ENCODE measurements at regions of chr3 and their contacts with region 1.

Region 1: GRCh38 chr3:9302425-9303181 is 53.2 kb upstream of the SRGAP3 start:
- DNase-seq: no peak
- H3K4me3 ChIP-seq: no peak overlapping the region
- H3K27me3 ChIP-seq: no peaks in the 10 kb centered on the region
- CTCF ChIP-seq: peak; percentile 91

Region 2: DNA sequence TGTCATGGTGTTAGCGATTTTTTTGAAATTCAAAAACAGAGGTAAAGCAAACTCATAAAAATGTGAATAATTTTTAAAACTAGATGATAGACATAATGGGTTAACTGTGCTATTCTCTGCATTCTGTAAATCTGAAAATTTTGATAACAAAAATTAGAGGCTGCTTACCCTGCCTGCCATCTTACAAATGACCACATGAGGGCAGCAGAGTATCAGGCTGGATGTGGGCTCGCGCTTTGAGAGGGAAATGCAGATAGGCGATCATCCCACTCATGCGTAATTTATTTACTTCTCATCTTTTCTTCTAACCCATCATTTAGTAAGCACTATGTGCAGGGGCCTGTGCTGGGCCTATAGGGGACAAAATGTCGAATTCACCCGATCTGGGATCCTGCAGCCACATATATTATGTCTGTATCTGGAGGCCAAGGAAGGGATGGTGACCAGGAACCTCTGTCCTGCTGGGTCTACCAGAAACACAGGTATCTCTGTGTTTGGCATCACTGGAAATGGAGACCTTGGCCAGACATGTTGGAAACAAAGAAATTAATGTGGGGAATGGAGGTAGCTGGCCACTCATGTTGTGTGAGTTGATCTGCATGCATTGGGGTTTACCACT is 331.5 kb before region 1 on chr3:
- CTCF ChIA-PET with region 1: interaction called, 28 read pairs
- POLR2A ChIA-PET with region 1: no interaction called
- DNase-seq: no peak
- H3K4me3 ChIP-seq: no peak overlapping the region
- H3K27me3 ChIP-seq: no peaks in the 10 kb centered on the region
- CTCF ChIP-seq: peak; percentile 93

Region 3: DNA sequence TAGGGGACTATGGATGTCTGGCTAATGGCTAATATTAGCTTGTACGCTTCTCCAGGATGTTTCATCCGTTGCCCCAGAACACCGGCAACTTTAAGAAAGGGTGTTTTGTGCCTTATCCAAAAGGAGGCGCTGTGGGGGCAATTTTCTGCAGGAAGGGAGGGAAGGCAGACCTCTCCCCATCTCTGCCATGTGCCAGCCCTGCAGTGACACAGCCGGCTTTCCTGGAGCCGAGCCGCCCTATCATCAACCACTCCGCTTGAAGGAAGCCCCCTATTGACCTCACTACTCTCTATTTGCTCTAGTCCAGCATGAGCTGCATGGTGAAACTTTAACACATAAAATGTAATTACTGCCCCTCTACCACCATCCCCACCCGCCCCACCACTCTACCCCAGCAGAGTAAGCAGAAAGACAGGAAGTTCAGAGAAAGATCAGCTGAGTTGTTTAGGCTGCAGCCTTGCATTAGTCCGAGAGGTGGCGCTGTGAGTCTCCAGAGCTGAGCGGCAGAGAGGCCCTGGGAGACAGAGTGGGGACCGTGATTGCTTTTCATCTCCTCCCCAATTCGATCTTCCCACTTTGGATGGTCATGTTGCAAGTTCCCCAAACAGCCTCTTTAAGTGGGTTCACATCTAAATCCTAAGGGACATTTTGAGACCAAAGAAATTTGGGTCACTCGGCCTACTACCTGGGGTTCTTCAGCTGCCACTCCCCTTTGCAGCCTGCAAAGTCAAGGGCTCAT is 314.8 kb before region 1 on chr3:
- CTCF ChIA-PET with region 1: interaction called, 27 read pairs
- POLR2A ChIA-PET with region 1: no interaction called
- DNase-seq: no peak
- H3K4me3 ChIP-seq: no peak overlapping the region
- H3K27me3 ChIP-seq: peaks cover 6% of the 10 kb centered on the region; the same call in 1 of the 2 replicates
- CTCF ChIP-seq: peak; percentile 77

Region 4: DNA sequence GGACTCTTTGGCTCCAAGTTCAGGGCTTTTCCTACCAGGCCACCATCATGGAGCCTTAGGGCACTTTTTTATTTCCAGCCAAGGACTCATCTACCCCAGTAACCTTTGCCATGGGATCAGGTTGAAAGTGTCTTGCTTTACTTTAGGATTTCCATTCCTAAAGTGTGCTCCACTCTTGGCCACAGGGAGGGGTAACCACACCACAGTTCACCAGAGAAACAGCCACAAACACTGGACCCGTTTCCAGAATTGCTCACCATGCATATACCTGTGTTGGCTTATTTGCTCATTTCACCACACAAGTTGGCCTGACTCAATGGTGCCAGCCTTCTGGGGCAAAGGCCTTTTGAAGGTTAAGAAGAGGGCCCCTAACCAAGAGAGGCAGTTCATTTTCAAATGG is 268.7 kb before region 1 on chr3:
- CTCF ChIA-PET with region 1: no interaction called
- POLR2A ChIA-PET with region 1: no interaction called
- DNase-seq: no peak
- H3K4me3 ChIP-seq: no peak overlapping the region
- H3K27me3 ChIP-seq: peaks cover 12% of the 10 kb centered on the region
- CTCF ChIP-seq: no peak

Region 5: GRCh38 chr3:9290566-9290965 is 12.0 kb before region 1 on chr3:
- CTCF ChIA-PET with region 1: interaction called, 17 read pairs
- POLR2A ChIA-PET with region 1: no interaction called
- DNase-seq: no peak
- H3K4me3 ChIP-seq: no peak overlapping the region
- H3K27me3 ChIP-seq: no peaks in the 10 kb centered on the region
- CTCF ChIP-seq: no peak

Region 6: GRCh38 chr3:9316881-9317361 is 14.3 kb after region 1 on chr3:
- CTCF ChIA-PET with region 1: interaction called, 26 read pairs
- POLR2A ChIA-PET with region 1: no interaction called
- DNase-seq: peak; percentile 36
- H3K4me3 ChIP-seq: peak overlapping the region; percentile 16; the same call in 1 of the 2 replicates
- H3K27me3 ChIP-seq: no peaks in the 10 kb centered on the region
- CTCF ChIP-seq: no peak

Region 7: GRCh38 chr3:9352917-9353752 is 50.5 kb after region 1 on chr3:
- CTCF ChIA-PET with region 1: no interaction called
- POLR2A ChIA-PET with region 1: no interaction called
- DNase-seq: no peak
- H3K4me3 ChIP-seq: no peak overlapping the region
- H3K27me3 ChIP-seq: no peaks in the 10 kb centered on the region
- CTCF ChIP-seq: peak; percentile 95

Measured in BJ (cell line).